Activated CD4-positive, alpha-beta memory T cell treated with anti-CD3 and anti-CD28 coated beads for 36 hours (primary cell): ENCODE measurements at regions of chr2 and their contacts with region 1.

Region 1: GRCh38 chr2:102355526-102356380 is at the start of gene IL18R1:
- DNase-seq: peak; percentile 81
- H3K4me3 Mint-ChIP-seq: peak within 1 kb of the TSS; percentile 97
- H3K27ac Mint-ChIP-seq: peak within 1 kb of the TSS; percentile 89
- H3K4me1 Mint-ChIP-seq: peaks cover 45% of the 10 kb centered on the region
- H3K27me3 Mint-ChIP-seq: no peaks in the 10 kb centered on the region
- total RNA-seq, gene IL18R1: 25.5 to 26.6 TPM

Region 2: GRCh38 chr2:102301867-102302362 is 53.8 kb before region 1 on chr2:
- CTCF ChIA-PET with region 1: interaction called, 3 read pairs
- POLR2A ChIA-PET with region 1: interaction called, 7 read pairs
- intact Hi-C with region 1: loop called (anchors 1 kb)
- DNase-seq: peak; percentile 65
- H3K4me3 Mint-ChIP-seq: peak overlapping the region; percentile 4
- H3K27ac Mint-ChIP-seq: peak overlapping the region; percentile 55
- H3K4me1 Mint-ChIP-seq: peaks cover 45% of the 10 kb centered on the region
- H3K27me3 Mint-ChIP-seq: peaks cover 4% of the 10 kb centered on the region

Region 3: DNA sequence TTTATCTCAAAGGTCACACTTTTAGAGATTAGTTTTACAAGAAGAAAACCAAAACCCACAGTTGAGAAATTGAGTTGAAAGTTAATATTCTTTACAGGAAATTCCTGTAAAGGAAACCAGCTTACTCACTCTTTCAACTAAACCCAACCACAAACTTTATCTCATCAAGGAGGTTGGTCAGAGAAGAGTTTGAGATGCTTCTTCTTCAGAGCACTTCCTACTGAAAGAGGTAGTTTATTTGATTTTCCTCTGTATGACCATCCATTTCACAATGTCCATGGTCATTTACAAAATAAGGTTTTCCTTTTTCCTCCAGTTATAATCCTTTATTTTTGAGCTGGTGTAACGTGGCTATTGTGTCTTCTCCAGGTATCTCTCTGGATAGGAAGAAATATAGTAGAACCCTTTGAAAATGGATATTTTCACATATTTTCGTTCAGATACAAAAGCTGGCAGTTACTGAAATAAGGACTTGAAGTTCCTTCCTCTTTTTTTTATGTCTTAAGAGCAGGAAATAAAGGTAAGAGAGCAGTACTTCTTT is 62.7 kb after region 1 on chr2:
- CTCF ChIA-PET with region 1: no interaction called
- POLR2A ChIA-PET with region 1: no interaction called
- intact Hi-C with region 1: loop called (anchors 2 kb)
- DNase-seq: no peak
- H3K4me3 Mint-ChIP-seq: peak overlapping the region; percentile 64
- H3K27ac Mint-ChIP-seq: peak overlapping the region; percentile 85
- H3K4me1 Mint-ChIP-seq: peaks cover 59% of the 10 kb centered on the region
- H3K27me3 Mint-ChIP-seq: peaks cover 6% of the 10 kb centered on the region

Region 4: GRCh38 chr2:102449370-102449974 is 93.7 kb after region 1 on chr2:
- CTCF ChIA-PET with region 1: interaction called, 74 read pairs
- POLR2A ChIA-PET with region 1: no interaction called
- intact Hi-C with region 1: loop called (anchors 1 kb)
- DNase-seq: peak; percentile 82
- H3K4me3 Mint-ChIP-seq: no peak overlapping the region
- H3K27ac Mint-ChIP-seq: no peak overlapping the region
- H3K4me1 Mint-ChIP-seq: no peaks in the 10 kb centered on the region
- H3K27me3 Mint-ChIP-seq: peaks cover 1% of the 10 kb centered on the region